H1 (cell line): ENCODE measurements at regions of chr1 and their contacts with region 1.

Region 1: DNA sequence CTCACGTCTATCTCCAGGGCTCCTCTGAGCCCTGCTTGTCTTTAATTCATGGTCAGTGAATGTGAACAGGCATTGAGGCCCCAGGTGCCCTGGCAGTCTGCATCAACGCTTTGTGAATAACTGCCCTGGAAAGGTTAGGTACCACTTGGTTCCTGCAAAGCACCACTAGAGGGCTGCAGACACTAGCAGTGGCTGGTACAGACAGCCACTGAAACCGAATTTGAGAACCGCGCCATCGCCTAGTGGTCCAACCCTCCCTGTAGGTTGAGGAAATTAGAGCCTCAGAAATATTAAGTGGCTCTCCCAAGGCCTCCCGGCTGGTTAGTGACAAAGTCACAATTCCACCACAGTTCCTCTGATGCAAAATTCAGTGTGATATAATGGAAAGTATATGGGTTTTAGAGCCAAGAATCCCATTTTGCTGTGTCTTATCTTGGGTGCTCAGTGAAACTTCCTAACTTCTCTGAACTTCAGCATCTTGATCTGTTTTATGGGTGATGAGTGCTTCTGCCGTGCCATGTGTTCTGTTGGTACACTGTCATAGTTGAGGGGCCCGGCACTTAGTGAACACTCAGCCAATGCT is 46.2 kb upstream of the BCL9 start:
- DNase-seq: peak in 1 of 2 experiments; percentile 72
- H3K4me3 ChIP-seq: no peak overlapping the region
- H3K27ac ChIP-seq: no peak overlapping the region
- H3K4me1 ChIP-seq: no peaks in the 10 kb centered on the region
- H3K27me3 ChIP-seq: no peaks in the 10 kb centered on the region
- CTCF ChIP-seq: peak; percentile 77 to 99 (median 95)
- EP300 ChIP-seq: no peak
- POLR2A ChIP-seq: no peak
- RAD21 ChIP-seq: peak; percentile 99 to 100

Region 2: GRCh38 chr1:147509786-147510395 is 14.8 kb after region 1 on chr1:
- CTCF ChIA-PET with region 1: interaction called, 33 read pairs
- POLR2A ChIA-PET with region 1: interaction called, 6 read pairs
- DNase-seq: no peak
- H3K4me3 ChIP-seq: no peak overlapping the region
- H3K27ac ChIP-seq: no peak overlapping the region
- H3K4me1 ChIP-seq: peaks cover 4 to 10% (median 9%) of the 10 kb centered on the region in 4 experiments; a peak in 6 of 7 replicates
- H3K27me3 ChIP-seq: no peaks in the 10 kb centered on the region
- CTCF ChIP-seq: no peak
- EP300 ChIP-seq: no peak
- POLR2A ChIP-seq: no peak
- RAD21 ChIP-seq: no peak

Region 3: GRCh38 chr1:147527941-147528936 is 33.1 kb after region 1 on chr1:
- CTCF ChIA-PET with region 1: interaction called, 10 read pairs
- POLR2A ChIA-PET with region 1: no interaction called
- DNase-seq: no peak
- H3K4me3 ChIP-seq: no peak overlapping the region
- H3K27ac ChIP-seq: no peak overlapping the region
- H3K4me1 ChIP-seq: no peaks in the 10 kb centered on the region
- H3K27me3 ChIP-seq: no peaks in the 10 kb centered on the region
- CTCF ChIP-seq: no peak
- EP300 ChIP-seq: no peak
- POLR2A ChIP-seq: no peak
- RAD21 ChIP-seq: no peak

Region 4: DNA sequence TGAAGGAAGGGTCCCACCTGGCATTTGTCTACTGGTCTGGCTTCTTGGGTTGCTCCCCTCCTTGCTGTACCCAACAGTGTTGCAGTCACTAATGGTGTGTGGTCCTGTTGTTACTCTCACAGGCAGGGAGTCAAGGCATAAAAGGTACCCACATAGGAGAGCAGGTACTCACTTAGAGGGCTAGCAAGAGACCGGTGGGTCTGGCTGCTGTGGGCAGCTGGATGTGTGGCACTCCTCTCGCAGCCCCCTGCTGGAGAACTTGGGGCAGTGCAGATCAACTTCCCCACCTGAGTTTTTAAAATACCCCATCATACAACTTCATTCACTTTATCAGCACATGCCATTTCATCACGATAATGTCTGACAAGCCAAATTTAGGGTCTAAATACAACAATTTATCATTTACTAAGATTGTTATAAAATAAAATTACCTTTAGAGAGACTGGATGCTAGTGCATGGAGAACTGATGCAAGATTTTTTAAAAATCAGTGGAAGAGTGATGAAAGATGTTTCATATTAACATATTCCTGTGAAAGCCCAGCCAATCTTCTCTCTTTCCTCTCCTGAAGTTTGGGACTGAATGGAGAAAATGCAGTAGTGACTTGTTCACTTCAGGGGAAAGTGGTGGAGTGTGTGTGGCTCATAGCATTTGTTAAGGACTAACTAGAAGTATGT is 132.5 kb after region 1 on chr1:
- CTCF ChIA-PET with region 1: interaction called, 30 read pairs
- POLR2A ChIA-PET with region 1: interaction called, 3 read pairs
- DNase-seq: peak in 1 of 2 experiments; percentile 66
- H3K4me3 ChIP-seq: no peak overlapping the region
- H3K27ac ChIP-seq: no peak overlapping the region
- H3K4me1 ChIP-seq: peaks cover 0 to 1% (median 0%) of the 10 kb centered on the region in 4 experiments; a peak in 3 of 7 replicates
- H3K27me3 ChIP-seq: no peaks in the 10 kb centered on the region
- CTCF ChIP-seq: peak; percentile 82 to 91 (median 86)
- EP300 ChIP-seq: no peak
- POLR2A ChIP-seq: no peak
- RAD21 ChIP-seq: peak; percentile 73 to 76